ENCODE measurements at regions of chr9 and their contacts with region 1.

Region 1: DNA sequence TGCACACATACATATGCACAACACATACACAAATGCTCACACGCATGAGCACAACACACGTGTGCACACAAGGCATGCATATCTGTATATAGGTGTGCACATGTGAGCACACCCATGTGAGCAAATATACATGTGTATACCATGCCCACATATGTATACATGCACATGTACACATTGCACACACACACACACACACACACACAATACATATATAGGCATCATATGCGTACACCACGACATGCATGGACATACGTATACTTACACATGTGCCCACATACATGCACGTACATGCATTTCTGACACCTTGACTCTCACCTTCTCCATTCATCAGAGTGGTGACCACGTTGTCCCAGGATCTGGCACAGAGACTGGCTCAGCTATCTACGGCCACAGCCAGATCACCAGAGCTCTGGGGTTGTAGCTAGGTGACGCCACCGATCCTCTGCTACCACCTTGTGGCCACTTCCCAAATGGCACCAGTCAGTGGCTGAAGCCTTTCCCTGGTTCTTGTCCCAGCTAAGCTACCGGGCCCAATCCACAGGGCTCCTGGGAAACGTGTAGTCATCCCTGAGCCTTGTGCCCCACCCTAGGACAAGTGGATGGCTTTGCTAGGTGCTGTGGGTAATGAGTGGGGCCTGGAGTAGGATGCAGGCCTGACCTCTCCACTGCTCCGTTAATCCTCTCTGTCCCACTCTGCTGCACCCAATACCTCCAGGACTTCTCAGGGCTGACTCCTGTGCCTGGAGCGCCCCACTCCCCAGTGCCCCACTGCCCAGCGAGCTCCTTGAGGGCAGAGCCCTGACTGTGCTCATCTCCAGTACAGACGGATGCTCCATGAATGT is 194.4 kb downstream of the RGS3 start:
- DNase-seq: peak; percentile 80 to 90
- H3K4me3 ChIP-seq: no peak overlapping the region
- H3K27ac ChIP-seq: no peak overlapping the region
- H3K4me1 ChIP-seq: peaks cover 0 to 18% (median 12%) of the 10 kb centered on the region in 4 donors
- H3K27me3 ChIP-seq: peaks cover 0 to 16% of the 10 kb centered on the region in 2 donors
- CTCF ChIP-seq: peak; percentile 97

Region 2: DNA sequence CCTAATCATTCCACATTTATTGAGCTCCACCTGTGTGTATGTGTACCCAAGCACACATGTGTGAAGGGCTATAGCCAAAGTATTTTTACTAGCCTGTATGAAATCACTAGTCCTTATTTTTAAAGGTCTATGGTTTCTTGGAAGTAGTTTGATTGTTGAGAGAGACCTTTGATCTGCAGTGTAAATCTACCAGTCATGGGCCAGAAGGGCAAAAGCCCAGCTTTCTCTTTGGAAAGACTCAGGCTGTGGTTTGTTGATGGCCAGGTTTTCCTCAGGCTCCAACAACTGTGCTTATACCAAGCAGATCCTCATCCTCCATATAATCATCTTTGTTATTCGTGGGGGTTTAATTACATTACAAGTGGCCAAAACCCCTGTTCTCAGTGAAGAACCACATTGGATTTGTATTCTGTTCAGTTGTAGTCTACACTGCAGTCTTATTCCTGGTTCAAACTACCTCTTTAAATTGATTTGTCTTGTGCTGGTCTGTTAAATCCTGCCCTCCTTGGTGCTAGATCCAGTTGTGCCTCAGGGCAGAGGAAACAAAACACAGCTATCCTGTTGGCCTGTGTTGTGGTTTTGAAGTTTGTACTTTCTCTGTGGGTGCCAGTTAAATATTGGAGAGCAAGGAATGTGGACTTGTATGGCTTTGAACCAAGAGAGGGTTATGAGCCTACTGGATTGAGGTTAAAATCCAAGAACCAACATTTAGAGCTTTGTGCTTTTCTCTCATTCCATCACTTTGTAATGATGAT is 395.8 kb before region 1 on chr9:
- intact Hi-C with region 1: no loop called
- DNase-seq: no peak
- H3K4me3 ChIP-seq: no peak overlapping the region
- H3K27ac ChIP-seq: no peak overlapping the region
- H3K4me1 ChIP-seq: no peaks in the 10 kb centered on the region
- H3K27me3 ChIP-seq: no peaks in the 10 kb centered on the region
- CTCF ChIP-seq: no peak

Region 3: DNA sequence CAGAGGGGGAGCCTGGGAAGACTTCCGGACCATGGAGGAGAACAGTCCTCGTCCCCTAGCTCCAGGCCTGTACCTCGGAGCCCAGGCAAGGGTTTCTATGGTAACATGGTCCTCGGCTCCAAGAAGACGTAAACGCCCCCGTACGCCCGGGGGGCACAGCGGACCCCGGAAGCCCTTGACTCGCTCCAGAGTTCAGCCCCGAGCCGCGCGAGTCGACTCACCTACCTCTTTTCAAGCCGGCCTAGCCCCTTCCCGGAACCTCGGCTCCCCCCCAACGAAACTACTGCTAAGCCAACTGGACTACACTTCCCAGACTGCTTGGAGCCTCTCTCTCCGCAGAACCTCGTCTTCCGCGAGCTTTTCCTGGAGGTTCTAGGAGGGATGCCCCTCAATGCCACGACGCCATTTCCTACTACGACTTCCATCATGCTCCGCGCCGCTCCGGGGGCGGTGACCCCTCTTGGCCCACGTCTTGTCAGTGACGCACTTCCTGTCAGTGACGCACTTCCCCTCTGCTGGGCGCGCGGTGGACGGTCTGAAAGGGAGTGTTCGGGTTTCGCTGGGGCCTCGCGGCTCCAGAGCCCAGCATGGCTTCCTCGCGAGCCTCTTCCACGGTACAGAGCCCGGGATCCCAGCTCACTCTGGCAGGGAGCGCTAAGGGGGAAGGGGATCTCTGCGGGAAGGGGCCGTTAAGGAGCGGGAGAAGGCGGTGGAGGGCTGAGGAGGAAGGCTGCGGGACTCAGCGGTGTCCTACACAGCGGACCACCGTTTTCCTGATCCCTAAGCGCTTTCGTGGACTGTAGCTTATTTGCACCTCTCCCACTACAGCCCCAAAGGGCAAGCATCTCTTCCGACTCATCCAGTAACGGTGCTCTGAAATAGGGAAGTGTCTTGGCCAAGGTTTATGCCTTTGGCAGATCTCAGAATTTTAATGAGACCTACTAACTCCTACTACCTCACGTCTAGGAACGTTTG is 382.5 kb before region 1 on chr9 and contains the starts of genes CDC26 and PRPF4:
- intact Hi-C with region 1: loop called (anchors 10 kb)
- DNase-seq: peak; percentile 97 to 98
- H3K4me3 ChIP-seq: peak within 1 kb of the TSS; percentile 87 to 93
- H3K27ac ChIP-seq: peak within 1 kb of the TSS; percentile 87 to 93
- H3K4me1 ChIP-seq: peaks cover 0 to 28% (median 18%) of the 10 kb centered on the region in 4 donors
- H3K27me3 ChIP-seq: no peaks in the 10 kb centered on the region
- CTCF ChIP-seq: peak in 1 of 2 experiments; percentile 23

Region 4: GRCh38 chr9:113409883-113410206 is 248.1 kb before region 1 on chr9:
- intact Hi-C with region 1: loop called (anchors 5 kb)
- DNase-seq: no peak
- H3K4me3 ChIP-seq: peak overlapping the region; percentile 68 to 86
- H3K27ac ChIP-seq: peak overlapping the region; percentile 93 to 94
- H3K4me1 ChIP-seq: peaks cover 0 to 20% (median 12%) of the 10 kb centered on the region in 4 donors
- H3K27me3 ChIP-seq: no peaks in the 10 kb centered on the region
- CTCF ChIP-seq: no peak

Region 5: DNA sequence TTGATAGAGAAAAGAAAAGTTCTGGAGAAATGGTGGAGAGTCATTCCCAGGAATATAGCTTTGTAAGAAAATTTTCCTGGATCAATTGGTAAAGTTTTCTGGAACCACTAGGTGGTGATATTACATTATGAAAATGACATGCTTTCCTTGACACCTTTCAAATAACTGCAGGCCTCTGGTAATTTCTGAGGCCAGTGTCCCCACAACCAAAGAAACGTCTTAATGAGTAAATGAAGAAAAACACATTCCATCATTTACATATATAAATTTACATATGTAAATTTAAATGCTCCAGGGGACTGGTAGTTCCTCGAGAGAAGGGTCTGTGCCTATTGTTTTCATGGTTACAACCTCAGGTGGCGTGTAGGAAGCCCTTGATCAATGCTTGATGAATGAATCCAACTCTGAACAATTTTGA is 211.6 kb before region 1 on chr9:
- intact Hi-C with region 1: loop called (anchors 2 kb)
- DNase-seq: no peak
- H3K4me3 ChIP-seq: no peak overlapping the region
- H3K27ac ChIP-seq: peak overlapping the region; percentile 5 to 49
- H3K4me1 ChIP-seq: peaks cover 0 to 35% (median 0%) of the 10 kb centered on the region in 4 donors
- H3K27me3 ChIP-seq: no peaks in the 10 kb centered on the region
- CTCF ChIP-seq: peak; percentile 54 to 83

Region 6: DNA sequence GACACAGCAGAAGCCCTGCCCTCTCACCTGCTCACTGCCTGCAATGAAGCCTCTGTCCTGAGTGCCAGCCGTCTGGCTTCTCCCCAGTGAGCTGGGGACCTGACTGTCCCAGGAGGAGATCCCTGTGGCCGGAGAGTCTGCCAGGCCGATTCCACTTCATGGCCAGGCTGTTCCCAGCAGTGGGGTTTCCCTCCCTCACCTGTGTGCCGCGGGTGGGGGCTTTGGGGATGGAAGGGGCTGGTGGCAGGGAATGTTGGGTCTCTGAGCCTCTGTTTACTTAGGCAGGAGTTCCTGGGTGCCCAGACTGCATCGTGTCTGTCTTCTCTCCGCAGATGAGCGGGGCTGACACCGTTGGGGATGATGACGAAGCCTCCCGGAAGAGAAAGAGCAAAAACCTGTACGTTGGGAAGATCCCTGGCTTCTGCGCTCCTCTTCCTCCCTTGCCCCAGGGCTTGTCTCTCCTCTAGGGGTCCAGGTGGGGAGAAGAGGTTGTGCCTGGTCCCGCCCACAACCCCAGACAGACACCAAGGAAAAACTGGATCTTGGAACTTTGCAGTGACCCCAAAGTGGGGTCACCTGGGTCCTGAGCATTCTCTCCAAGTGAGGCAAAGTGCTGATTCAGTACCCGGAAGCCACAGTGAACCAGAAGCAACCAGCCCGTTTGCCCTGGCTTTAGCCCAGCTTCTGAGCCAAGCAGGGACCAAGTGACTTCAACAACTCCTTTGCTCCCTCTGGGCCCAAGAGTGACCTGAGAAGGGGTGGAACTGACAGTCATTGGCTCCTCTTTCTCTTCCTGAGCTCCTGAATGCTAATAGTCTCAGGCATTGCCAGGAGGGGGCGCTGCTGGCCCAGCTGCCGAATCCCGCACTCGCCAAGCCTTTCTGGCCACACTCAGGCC is 66.7 kb before region 1 on chr9:
- intact Hi-C with region 1: loop called (anchors 2 kb)
- DNase-seq: peak; percentile 83 to 89
- H3K4me3 ChIP-seq: no peak overlapping the region
- H3K27ac ChIP-seq: peak overlapping the region; percentile 68 to 81
- H3K4me1 ChIP-seq: peaks cover 0 to 87% (median 70%) of the 10 kb centered on the region in 4 donors
- H3K27me3 ChIP-seq: no peaks in the 10 kb centered on the region
- CTCF ChIP-seq: peak; percentile 93 to 94

Measured in tibial artery (tissue), 4 donors.